CD4-positive, alpha-beta memory T cell (primary cell): ENCODE measurements at regions of chr15 and their contacts with region 1.

Region 1: DNA sequence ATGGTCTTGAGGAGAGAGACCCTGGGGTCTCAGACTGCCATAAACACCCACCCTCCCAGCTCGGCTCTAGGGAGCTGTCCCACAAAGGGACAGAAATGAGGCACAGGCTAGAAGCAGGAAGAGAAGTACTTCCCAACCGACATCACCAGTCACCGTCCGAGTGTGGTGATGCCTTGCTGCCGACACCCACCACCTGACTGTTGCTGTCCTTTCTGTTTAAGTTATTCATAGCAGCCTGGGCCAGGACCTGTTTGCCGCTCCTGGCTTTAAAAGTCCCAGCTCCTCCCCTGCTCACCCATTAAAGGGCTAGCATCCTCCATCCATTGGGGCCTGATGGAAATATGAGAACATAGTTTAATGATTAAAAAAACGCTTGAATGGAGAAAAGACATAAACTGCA is 13.2 kb upstream of the SPG11 start:
- DNase-seq: peak in 1 of 5 donors; percentile 22
- H3K4me3 ChIP-seq: peak overlapping the region; percentile 10 to 23
- H3K4me3 Mint-ChIP-seq: peak overlapping the region; percentile 45 to 88 (median 82)
- H3K27ac ChIP-seq: peak overlapping the region; percentile 39
- H3K27ac Mint-ChIP-seq: peak overlapping the region; percentile 87 to 97 (median 95)
- H3K4me1 ChIP-seq: peaks cover 100% of the 10 kb centered on the region
- H3K4me1 Mint-ChIP-seq: peaks cover 67 to 95% (median 86%) of the 10 kb centered on the region in 4 donors
- H3K27me3 ChIP-seq: no peaks in the 10 kb centered on the region
- H3K27me3 Mint-ChIP-seq: no peaks in the 10 kb centered on the region

Region 2: DNA sequence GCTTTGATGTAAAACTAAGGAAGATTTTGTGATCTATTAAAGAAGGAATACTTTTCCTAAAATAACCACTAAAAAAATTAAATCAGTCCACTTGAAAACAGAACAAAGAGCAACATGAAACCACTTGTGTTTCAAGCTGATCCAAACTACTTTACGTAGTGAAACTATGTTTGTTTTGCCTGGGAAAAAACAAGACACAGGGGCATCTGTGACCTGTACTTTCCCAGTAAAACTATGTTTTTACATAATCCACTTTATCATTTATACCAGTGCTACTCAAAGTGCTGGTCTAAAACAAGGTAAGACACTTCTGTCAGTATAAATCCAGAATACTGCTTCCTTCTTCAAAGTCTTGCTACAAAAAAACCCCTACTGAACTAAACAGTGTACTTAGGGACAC is 69.9 kb before region 1 on chr15:
- CTCF ChIA-PET with region 1: no interaction called
- POLR2A ChIA-PET with region 1: no interaction called
- intact Hi-C with region 1: no loop called
- DNase-seq: no peak
- H3K4me3 ChIP-seq: no peak overlapping the region
- H3K4me3 Mint-ChIP-seq: no peak overlapping the region
- H3K27ac ChIP-seq: no peak overlapping the region
- H3K27ac Mint-ChIP-seq: peak overlapping the region in 2 of 7 donors; percentile 10
- H3K4me1 ChIP-seq: no peaks in the 10 kb centered on the region
- H3K4me1 Mint-ChIP-seq: no peaks in the 10 kb centered on the region
- H3K27me3 ChIP-seq: no peaks in the 10 kb centered on the region
- H3K27me3 Mint-ChIP-seq: no peaks in the 10 kb centered on the region

Region 3: GRCh38 chr15:44698641-44699040 is 22.0 kb after region 1 on chr15:
- CTCF ChIA-PET with region 1: interaction called, 167 read pairs
- POLR2A ChIA-PET with region 1: interaction called, 5,737 read pairs
- intact Hi-C with region 1: no loop called
- DNase-seq: no peak
- H3K4me3 ChIP-seq: no peak overlapping the region
- H3K4me3 Mint-ChIP-seq: no peak overlapping the region
- H3K27ac ChIP-seq: no peak overlapping the region
- H3K27ac Mint-ChIP-seq: peak overlapping the region in 1 of 7 donors; percentile 37
- H3K4me1 ChIP-seq: peaks cover 12% of the 10 kb centered on the region
- H3K4me1 Mint-ChIP-seq: peaks cover 17 to 47% (median 31%) of the 10 kb centered on the region in 4 donors
- H3K27me3 ChIP-seq: no peaks in the 10 kb centered on the region
- H3K27me3 Mint-ChIP-seq: no peaks in the 10 kb centered on the region